Astrocyte of the cerebellum (primary cell): ENCODE measurements at regions of chr5 and their contacts with region 1.

Region 1: DNA sequence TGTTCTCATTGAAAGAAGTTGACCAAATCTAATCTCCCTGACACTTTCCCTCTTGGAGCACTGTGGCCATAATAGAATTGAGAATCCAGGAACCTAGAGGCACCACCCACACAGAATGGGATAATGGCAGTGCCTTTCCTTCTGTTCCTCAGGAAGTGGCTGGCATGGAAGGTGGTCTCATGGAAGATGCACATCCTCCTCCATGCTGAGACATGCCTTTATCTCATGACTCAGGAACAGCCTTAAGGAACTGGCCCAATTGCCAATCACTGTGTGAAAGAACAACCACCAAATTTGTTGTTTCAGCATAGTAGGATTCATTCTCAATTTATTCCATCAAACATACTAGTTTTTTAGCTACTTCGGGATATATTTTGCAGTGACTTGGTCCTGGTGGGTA is 137.5 kb upstream of the RASGRF2 start:
- DNase-seq: no peak
- H3K4me3 ChIP-seq: no peak overlapping the region
- CTCF ChIP-seq: no peak

Region 2: DNA sequence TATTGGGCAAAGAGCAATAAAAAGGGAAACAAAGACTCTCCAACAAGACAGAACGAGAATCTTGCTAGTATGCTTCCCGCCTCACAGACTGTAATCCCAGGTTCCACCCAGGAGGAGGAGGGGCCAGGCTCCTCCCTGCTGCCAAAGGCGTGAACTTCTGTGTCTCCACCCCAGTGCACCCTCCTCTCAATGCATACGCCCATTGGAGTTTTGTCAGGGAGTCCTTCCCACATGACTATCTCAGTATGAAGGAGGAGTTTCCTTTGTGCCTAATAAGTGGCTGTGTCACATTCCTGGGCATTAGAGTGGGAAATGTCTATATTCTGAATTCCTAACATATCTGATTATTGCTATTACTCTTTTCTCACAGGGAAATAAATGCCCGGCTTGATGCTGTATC is 61.5 kb before region 1 on chr5:
- in situ Hi-C with region 1: no loop called
- DNase-seq: no peak
- H3K4me3 ChIP-seq: no peak overlapping the region
- CTCF ChIP-seq: no peak

Region 3: GRCh38 chr5:80777347-80778287 is 45.0 kb before region 1 on chr5:
- in situ Hi-C with region 1: loop called (anchors 5 kb)
- DNase-seq: no peak
- H3K4me3 ChIP-seq: no peak overlapping the region
- CTCF ChIP-seq: no peak